B cell (primary cell): ENCODE measurements at regions of chrX and their contacts with region 1.

Region 1: DNA sequence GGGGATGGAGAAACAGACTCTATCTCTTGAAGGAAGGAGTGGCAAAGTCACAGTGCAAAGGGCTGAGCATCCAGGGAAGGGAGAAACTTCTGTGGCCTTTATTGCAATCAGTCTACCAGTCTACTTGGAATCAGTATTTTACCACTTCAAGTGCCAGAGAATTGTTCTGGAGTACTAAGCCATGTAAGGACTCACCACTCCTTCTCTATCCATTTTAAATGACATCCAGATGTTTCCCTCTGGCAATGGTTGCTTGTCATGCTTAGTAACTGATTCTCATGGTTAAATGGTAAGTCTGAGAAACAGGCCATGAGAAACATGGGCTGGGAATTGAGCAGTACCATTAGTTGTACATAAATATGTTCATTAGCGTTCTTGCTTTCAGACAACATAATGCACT is 21.1 kb upstream of the SMIM10 start:
- DNase-seq: no peak
- ATAC-seq: no peak
- H3K4me3 ChIP-seq: no peak overlapping the region
- H3K4me3 Mint-ChIP-seq: no peak overlapping the region
- H3K27ac ChIP-seq: no peak overlapping the region
- H3K27ac Mint-ChIP-seq: no peak overlapping the region
- H3K4me1 ChIP-seq: no peaks in the 10 kb centered on the region
- H3K4me1 Mint-ChIP-seq: no peaks in the 10 kb centered on the region
- H3K27me3 ChIP-seq: no peaks in the 10 kb centered on the region
- H3K27me3 Mint-ChIP-seq: peaks cover 3% of the 10 kb centered on the region
- CTCF ChIP-seq: no peak

Region 2: DNA sequence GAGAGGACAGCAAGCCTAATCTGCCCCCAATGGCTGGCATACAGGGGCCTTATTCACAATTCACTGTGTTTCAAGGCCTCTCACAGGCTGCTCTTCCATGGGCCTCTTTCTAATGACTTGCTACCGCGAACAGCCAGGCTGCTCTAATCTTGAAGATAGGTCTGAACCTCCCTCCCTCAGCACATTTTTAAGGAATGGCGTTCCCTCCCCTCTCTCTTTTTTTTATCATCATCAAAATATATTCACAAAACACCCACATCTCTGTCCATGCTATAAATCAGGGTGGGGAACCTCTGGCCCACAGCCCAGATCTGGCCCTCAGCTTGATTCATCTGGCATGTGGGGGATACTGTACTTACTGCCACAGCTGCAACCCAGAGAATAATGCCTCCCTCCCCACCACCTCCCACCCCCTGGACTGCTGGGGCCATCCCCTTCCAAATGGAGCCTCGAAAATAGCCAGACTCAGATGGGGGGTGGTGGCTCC is 235.2 kb before region 1 on chrX:
- CTCF ChIA-PET with region 1: no interaction called
- POLR2A ChIA-PET with region 1: no interaction called
- intact Hi-C with region 1: no loop called
- DNase-seq: no peak
- ATAC-seq: no peak
- H3K4me3 ChIP-seq: no peak overlapping the region
- H3K4me3 Mint-ChIP-seq: no peak overlapping the region
- H3K27ac ChIP-seq: no peak overlapping the region
- H3K27ac Mint-ChIP-seq: no peak overlapping the region
- H3K4me1 ChIP-seq: no peaks in the 10 kb centered on the region
- H3K4me1 Mint-ChIP-seq: no peaks in the 10 kb centered on the region
- H3K27me3 ChIP-seq: no peaks in the 10 kb centered on the region
- H3K27me3 Mint-ChIP-seq: peaks cover 4% of the 10 kb centered on the region
- CTCF ChIP-seq: no peak

Region 3: DNA sequence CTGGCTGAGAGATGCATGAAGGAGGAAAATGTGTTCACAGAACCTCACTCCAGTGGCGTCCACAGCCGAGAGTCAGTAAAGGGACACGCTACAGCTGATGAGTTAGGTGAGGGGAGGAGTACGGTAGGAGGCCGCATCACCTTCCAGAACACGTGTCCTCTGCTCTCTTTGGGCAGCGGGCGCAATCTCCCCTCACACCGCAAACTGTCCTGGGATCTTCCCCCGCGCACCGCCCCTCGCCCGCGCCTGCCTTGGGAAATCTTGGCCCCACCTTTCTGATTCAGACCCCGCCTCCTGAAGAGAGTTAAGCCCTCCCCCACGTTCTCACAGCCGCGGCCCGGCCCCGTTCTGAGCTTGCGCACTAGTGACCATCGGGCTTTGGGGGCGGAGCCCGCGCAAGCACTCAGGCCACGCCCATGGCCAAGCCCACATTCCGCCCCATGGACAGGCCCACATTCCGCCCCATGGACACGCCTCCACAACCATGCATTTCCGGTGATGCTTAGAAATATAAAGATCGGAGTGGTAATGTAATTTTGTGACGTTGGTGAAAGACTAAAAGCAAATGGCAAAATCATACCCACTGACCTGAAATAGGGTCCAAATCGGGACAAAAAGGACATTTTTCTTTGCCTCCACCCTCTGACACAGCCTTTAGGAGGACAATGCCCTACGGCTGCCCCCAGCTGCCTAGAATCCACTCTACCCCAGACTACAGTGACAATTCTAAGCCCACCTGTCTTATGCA is 34.3 kb after region 1 on chrX:
- CTCF ChIA-PET with region 1: interaction called, 3 read pairs
- POLR2A ChIA-PET with region 1: no interaction called
- intact Hi-C with region 1: loop called (anchors 1 kb)
- DNase-seq: peak; percentile 86
- ATAC-seq: peak; percentile 98
- H3K4me3 ChIP-seq: peak overlapping the region; percentile 25 to 56 (median 47)
- H3K4me3 Mint-ChIP-seq: peak overlapping the region; percentile 91
- H3K27ac ChIP-seq: no peak overlapping the region
- H3K27ac Mint-ChIP-seq: peak overlapping the region; percentile 39
- H3K4me1 ChIP-seq: peaks cover 8 to 9% of the 10 kb centered on the region in 2 donors
- H3K4me1 Mint-ChIP-seq: peaks cover 10% of the 10 kb centered on the region
- H3K27me3 ChIP-seq: peaks cover 0 to 2% (median 0%) of the 10 kb centered on the region in 4 experiments
- H3K27me3 Mint-ChIP-seq: no peaks in the 10 kb centered on the region
- CTCF ChIP-seq: no peak

Region 4: DNA sequence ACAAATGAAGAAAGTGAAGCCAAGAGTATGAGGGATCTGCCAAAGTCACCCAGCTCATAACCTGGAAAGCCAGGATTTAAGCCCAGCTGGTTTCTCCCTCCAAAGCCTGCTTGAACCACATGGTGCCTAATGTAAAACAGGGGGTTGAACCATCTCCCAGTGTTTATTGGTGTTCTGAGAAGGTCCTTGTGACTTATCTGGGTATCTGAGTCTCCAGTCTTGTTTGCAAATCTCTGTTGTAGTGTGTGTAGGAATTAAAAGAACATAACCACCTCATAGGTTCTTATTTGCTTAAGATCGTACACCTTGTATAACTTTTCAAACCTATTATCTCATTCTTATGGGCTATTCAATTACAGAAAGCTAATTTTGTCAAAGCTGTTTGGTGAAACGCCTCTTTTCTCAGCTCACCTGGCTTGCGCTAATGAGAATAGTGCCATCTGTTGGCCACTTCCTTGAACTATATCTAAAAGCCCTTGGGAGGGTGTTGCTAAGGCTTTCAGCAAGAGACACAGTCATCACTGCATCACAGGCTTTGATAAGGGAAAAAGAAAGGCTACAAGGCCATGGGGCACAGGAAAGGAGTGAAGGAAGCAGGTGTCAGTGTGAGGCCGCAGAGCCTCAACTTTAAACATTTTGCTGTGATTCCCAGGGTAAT is 116.6 kb after region 1 on chrX:
- CTCF ChIA-PET with region 1: interaction called, 14 read pairs
- POLR2A ChIA-PET with region 1: no interaction called
- intact Hi-C with region 1: loop called (anchors 1 kb)
- DNase-seq: peak; percentile 74
- ATAC-seq: peak; percentile 90
- H3K4me3 ChIP-seq: no peak overlapping the region
- H3K4me3 Mint-ChIP-seq: no peak overlapping the region
- H3K27ac ChIP-seq: no peak overlapping the region
- H3K27ac Mint-ChIP-seq: no peak overlapping the region
- H3K4me1 ChIP-seq: no peaks in the 10 kb centered on the region
- H3K4me1 Mint-ChIP-seq: peaks cover 3% of the 10 kb centered on the region
- H3K27me3 ChIP-seq: no peaks in the 10 kb centered on the region
- H3K27me3 Mint-ChIP-seq: no peaks in the 10 kb centered on the region
- CTCF ChIP-seq: peak; percentile 65

Region 5: DNA sequence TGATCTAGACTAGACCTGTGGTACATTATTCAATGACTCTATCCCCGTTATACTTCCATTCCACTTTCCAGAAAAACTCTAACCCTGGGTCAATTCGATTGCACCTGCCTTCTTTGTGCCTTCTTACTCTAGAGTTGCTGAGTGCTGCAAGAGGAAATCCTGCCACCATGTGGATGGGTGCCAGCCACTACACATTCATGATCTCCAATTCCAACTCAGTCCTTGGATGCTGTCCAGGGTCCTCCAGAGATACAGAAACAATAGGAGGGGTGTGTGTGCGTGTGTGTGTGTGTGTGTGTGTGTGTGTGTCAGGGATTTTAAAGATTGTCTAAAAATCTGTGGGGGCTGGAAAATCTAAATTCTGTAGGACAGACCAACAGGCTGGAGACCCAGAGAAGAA is 507.9 kb after region 1 on chrX:
- CTCF ChIA-PET with region 1: no interaction called
- POLR2A ChIA-PET with region 1: no interaction called
- intact Hi-C with region 1: loop called (anchors 10 kb)
- DNase-seq: peak; percentile 24
- ATAC-seq: no peak
- H3K4me3 ChIP-seq: no peak overlapping the region
- H3K4me3 Mint-ChIP-seq: no peak overlapping the region
- H3K27ac ChIP-seq: no peak overlapping the region
- H3K27ac Mint-ChIP-seq: no peak overlapping the region
- H3K4me1 ChIP-seq: no peaks in the 10 kb centered on the region
- H3K4me1 Mint-ChIP-seq: no peaks in the 10 kb centered on the region
- H3K27me3 ChIP-seq: no peaks in the 10 kb centered on the region
- H3K27me3 Mint-ChIP-seq: peaks cover 7% of the 10 kb centered on the region
- CTCF ChIP-seq: peak; percentile 22